ENCODE measurements at regions of chrX and their contacts with region 1.

Region 1: GRCh38 chrX:119729408-119730201 is 28.8 kb upstream of the SOWAHD start:
- DNase-seq: peak; percentile 44 to 83 (median 60)
- ATAC-seq: peak; percentile 58
- H3K4me3 ChIP-seq: no peak overlapping the region
- H3K4me3 Mint-ChIP-seq: no peak overlapping the region
- H3K27ac ChIP-seq: no peak overlapping the region
- H3K27ac Mint-ChIP-seq: no peak overlapping the region
- H3K4me1 ChIP-seq: peaks cover 9% of the 10 kb centered on the region
- H3K4me1 Mint-ChIP-seq: peaks cover 13% of the 10 kb centered on the region
- H3K27me3 ChIP-seq: no peaks in the 10 kb centered on the region
- H3K27me3 Mint-ChIP-seq: no peaks in the 10 kb centered on the region
- CTCF ChIP-seq: peak; percentile 33

Region 2: DNA sequence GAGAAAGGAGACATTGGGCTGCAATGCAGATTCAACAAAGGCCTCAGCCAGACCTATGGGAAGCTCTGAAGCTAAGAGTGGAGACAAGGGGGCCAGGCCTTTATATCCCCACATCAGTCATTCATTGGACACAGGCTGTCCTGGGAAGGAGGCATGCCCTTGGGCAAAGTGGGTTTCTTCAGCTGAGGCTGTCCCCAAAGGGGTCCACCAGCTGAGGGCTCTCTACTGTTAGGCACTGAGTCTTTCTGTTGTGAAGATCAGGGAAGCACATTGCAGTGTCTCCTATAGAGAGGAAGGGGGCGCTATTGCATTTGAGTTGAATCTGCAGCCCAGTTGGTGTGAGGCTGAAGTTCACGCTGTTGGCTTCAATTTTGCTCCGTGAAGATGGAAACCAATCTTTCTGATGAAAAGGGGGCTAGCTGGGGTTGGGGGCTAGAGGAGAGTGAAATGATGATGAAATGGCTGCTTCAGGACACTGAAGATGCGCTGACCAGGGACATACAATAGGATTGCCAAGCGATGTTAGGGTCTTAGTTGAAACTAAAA is 213.4 kb before region 1 on chrX:
- CTCF ChIA-PET with region 1: interaction called, 7 read pairs
- POLR2A ChIA-PET with region 1: no interaction called
- intact Hi-C with region 1: loop called (anchors 1 kb)
- DNase-seq: peak in 12 of 14 experiments; percentile 4 to 77 (median 18)
- ATAC-seq: peak; percentile 96
- H3K4me3 ChIP-seq: no peak overlapping the region
- H3K4me3 Mint-ChIP-seq: no peak overlapping the region
- H3K27ac ChIP-seq: no peak overlapping the region
- H3K27ac Mint-ChIP-seq: no peak overlapping the region
- H3K4me1 ChIP-seq: peaks cover 2% of the 10 kb centered on the region
- H3K4me1 Mint-ChIP-seq: peaks cover 5% of the 10 kb centered on the region
- H3K27me3 ChIP-seq: no peaks in the 10 kb centered on the region
- H3K27me3 Mint-ChIP-seq: no peaks in the 10 kb centered on the region
- CTCF ChIP-seq: peak; percentile 69

Region 3: GRCh38 chrX:119606280-119607015 is 123.2 kb before region 1 on chrX and contains the start of gene NKRF:
- CTCF ChIA-PET with region 1: interaction called, 17 read pairs
- POLR2A ChIA-PET with region 1: interaction called, 5 read pairs
- intact Hi-C with region 1: no loop called
- DNase-seq: peak; percentile 81 to 96 (median 86)
- ATAC-seq: peak; percentile 76
- H3K4me3 ChIP-seq: peak within 1 kb of the TSS; percentile 90
- H3K4me3 Mint-ChIP-seq: peak within 1 kb of the TSS; percentile 99
- H3K27ac ChIP-seq: peak within 1 kb of the TSS; percentile 82 to 90
- H3K27ac Mint-ChIP-seq: peak within 1 kb of the TSS; percentile 96
- H3K4me1 ChIP-seq: peaks cover 17% of the 10 kb centered on the region
- H3K4me1 Mint-ChIP-seq: peaks cover 48% of the 10 kb centered on the region
- H3K27me3 ChIP-seq: no peaks in the 10 kb centered on the region
- H3K27me3 Mint-ChIP-seq: no peaks in the 10 kb centered on the region
- CTCF ChIP-seq: no peak
- total RNA-seq, gene NKRF: 16.4 to 16.5 TPM

Region 4: GRCh38 chrX:119617517-119618164 is 112.0 kb before region 1 on chrX:
- CTCF ChIA-PET with region 1: interaction called, 12 read pairs
- POLR2A ChIA-PET with region 1: no interaction called
- intact Hi-C with region 1: loop called in 1 of 2 experiments (anchors 5 kb)
- DNase-seq: no peak
- ATAC-seq: no peak
- H3K4me3 ChIP-seq: no peak overlapping the region
- H3K4me3 Mint-ChIP-seq: no peak overlapping the region
- H3K27ac ChIP-seq: no peak overlapping the region
- H3K27ac Mint-ChIP-seq: peak overlapping the region; percentile 47
- H3K4me1 ChIP-seq: no peaks in the 10 kb centered on the region
- H3K4me1 Mint-ChIP-seq: peaks cover 3% of the 10 kb centered on the region
- H3K27me3 ChIP-seq: no peaks in the 10 kb centered on the region
- H3K27me3 Mint-ChIP-seq: no peaks in the 10 kb centered on the region
- CTCF ChIP-seq: no peak

Region 5: GRCh38 chrX:119655125-119655524 is 74.5 kb before region 1 on chrX:
- CTCF ChIA-PET with region 1: interaction called, 13 read pairs
- POLR2A ChIA-PET with region 1: interaction called, 5 read pairs
- intact Hi-C with region 1: no loop called
- DNase-seq: peak in 12 of 14 experiments; percentile 18 to 70 (median 49)
- ATAC-seq: peak; percentile 51
- H3K4me3 ChIP-seq: no peak overlapping the region
- H3K4me3 Mint-ChIP-seq: peak overlapping the region; percentile 56
- H3K27ac ChIP-seq: peak overlapping the region; percentile 29 to 64
- H3K27ac Mint-ChIP-seq: peak overlapping the region; percentile 90
- H3K4me1 ChIP-seq: peaks cover 24% of the 10 kb centered on the region
- H3K4me1 Mint-ChIP-seq: peaks cover 48% of the 10 kb centered on the region
- H3K27me3 ChIP-seq: no peaks in the 10 kb centered on the region
- H3K27me3 Mint-ChIP-seq: no peaks in the 10 kb centered on the region
- CTCF ChIP-seq: no peak

Region 6: GRCh38 chrX:119693040-119693995 is 36.3 kb before region 1 on chrX and contains the start of gene SEPTIN6:
- CTCF ChIA-PET with region 1: interaction called, 15 read pairs
- POLR2A ChIA-PET with region 1: interaction called, 14 read pairs
- intact Hi-C with region 1: loop called (anchors 2 to 5 kb)
- DNase-seq: peak; percentile 68 to 91 (median 83)
- ATAC-seq: peak; percentile 57
- H3K4me3 ChIP-seq: peak within 1 kb of the TSS; percentile 81
- H3K4me3 Mint-ChIP-seq: peak within 1 kb of the TSS; percentile 97
- H3K27ac ChIP-seq: peak within 1 kb of the TSS; percentile 64 to 85
- H3K27ac Mint-ChIP-seq: peak within 1 kb of the TSS; percentile 96
- H3K4me1 ChIP-seq: peaks cover 27% of the 10 kb centered on the region
- H3K4me1 Mint-ChIP-seq: peaks cover 22% of the 10 kb centered on the region
- H3K27me3 ChIP-seq: no peaks in the 10 kb centered on the region
- H3K27me3 Mint-ChIP-seq: no peaks in the 10 kb centered on the region
- CTCF ChIP-seq: no peak
- total RNA-seq, gene SEPTIN6: 132 to 134 TPM

Region 7: GRCh38 chrX:119698845-119699244 is 30.8 kb before region 1 on chrX:
- CTCF ChIA-PET with region 1: interaction called, 15 read pairs
- POLR2A ChIA-PET with region 1: interaction called, 14 read pairs
- intact Hi-C with region 1: loop called in 1 of 2 experiments (anchors 5 kb)
- DNase-seq: peak in 3 of 14 experiments; percentile 55 to 71 (median 68)
- ATAC-seq: peak; percentile 56
- H3K4me3 ChIP-seq: no peak overlapping the region
- H3K4me3 Mint-ChIP-seq: no peak overlapping the region
- H3K27ac ChIP-seq: no peak overlapping the region
- H3K27ac Mint-ChIP-seq: no peak overlapping the region
- H3K4me1 ChIP-seq: peaks cover 5% of the 10 kb centered on the region
- H3K4me1 Mint-ChIP-seq: peaks cover 6% of the 10 kb centered on the region
- H3K27me3 ChIP-seq: no peaks in the 10 kb centered on the region
- H3K27me3 Mint-ChIP-seq: no peaks in the 10 kb centered on the region
- CTCF ChIP-seq: peak; percentile 53

Measured in CD4-positive, alpha-beta T cell (primary cell).